ENCODE measurements at regions of chr1 and their contacts with region 1.

Region 1: DNA sequence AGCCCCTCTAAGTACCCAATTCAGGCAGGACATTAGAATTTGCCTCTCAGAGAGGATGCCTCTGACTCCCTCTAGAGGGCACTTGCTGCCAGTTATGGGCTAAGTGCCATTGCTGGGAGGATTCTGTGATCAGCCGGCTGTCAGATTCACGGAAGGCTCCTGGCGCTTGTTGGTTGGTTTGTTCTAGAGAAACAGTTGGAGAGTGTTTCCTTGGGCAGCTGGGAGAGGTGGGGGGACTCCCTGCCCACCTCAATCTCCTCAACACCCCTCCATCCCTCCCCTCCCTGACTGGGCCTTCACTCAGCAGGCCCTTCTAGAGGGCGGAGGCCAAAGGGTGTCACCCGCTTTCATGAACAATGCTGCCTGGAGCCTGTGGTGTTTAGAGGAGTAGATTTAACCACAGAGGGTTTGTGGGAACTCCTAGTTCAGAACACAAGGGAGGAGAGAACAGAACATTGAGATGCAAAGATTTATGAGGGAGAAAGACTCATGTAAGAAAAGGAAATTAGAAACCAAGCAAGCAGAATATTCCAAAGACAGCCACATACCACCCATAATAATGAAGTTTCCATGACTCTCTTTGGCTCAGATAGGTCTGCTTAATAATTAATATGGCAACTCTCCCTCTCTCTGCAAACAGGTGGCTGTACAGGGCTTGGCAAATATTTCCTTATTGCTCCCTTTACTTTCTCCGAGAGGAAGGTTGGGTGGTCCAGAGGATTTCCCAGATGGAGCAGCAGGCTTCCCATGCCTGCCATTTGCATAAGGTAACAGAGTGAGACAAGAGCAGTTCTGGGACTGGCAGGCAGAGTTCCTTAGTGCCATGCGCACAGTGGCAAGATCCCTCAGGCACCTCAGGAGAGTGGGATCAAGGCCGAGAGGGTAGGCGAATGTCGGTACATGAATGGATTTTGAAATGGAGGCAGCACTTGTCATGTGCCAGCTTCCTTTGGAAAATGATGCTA is 30.0 kb upstream of the ACP6 start:
- DNase-seq: peak; percentile 81
- H3K4me3 Mint-ChIP-seq: no peak overlapping the region
- H3K27ac Mint-ChIP-seq: no peak overlapping the region
- H3K4me1 Mint-ChIP-seq: peaks cover 7% of the 10 kb centered on the region
- H3K27me3 Mint-ChIP-seq: no peaks in the 10 kb centered on the region
- CTCF ChIP-seq: peak; percentile 96

Region 2: DNA sequence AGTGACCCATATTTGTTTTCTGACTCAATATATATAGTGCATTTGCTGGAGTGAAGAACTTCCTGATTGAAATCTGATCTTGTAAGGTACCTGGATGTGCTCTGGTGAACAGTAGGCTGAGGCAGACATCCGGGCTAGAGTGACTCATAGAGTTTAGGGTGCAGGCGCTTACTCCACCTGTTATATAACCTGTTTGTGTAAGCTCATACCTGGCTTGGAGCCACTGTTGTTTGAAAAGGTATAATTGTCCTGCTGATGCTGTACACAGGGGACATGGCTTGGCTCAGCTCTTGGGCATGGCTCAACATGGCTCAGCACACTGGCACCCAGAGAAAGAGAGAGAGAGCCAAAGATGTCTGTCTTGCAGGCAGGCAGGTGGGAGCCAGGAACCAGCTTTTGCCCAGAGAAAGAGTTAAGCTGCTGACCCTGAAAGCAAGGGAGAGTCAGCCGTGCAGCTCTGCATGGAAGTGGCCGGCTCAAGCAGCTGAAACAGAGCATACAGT is 16.8 kb after region 1 on chr1:
- CTCF ChIA-PET with region 1: interaction called, 23 read pairs
- POLR2A ChIA-PET with region 1: interaction called, 6 read pairs
- intact Hi-C with region 1: no loop called
- DNase-seq: peak; percentile 88
- H3K4me3 Mint-ChIP-seq: no peak overlapping the region
- H3K27ac Mint-ChIP-seq: no peak overlapping the region
- H3K4me1 Mint-ChIP-seq: peaks cover 23% of the 10 kb centered on the region
- H3K27me3 Mint-ChIP-seq: peaks cover 15% of the 10 kb centered on the region
- CTCF ChIP-seq: no peak

Region 3: DNA sequence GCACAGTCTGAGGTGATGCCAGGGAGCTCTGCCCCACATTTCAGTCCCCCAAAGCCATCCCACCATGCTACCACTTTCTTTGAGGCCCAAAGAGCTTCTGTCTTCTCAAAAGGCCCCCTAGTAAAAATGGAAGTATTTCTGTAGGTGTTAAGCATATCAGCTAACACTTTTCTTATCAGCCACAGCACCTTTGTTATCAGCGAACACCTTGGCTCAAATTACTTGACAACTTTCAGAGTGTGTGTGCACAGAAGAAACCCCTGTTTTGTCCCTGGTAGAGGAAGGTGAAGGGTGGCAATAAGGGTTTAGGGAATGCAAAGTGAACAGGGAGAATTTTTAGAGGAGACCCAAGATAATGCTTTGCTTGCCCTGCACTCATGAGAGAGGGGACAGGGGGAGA is 147.5 kb after region 1 on chr1:
- CTCF ChIA-PET with region 1: no interaction called
- POLR2A ChIA-PET with region 1: no interaction called
- intact Hi-C with region 1: no loop called
- DNase-seq: no peak
- H3K4me3 Mint-ChIP-seq: no peak overlapping the region
- H3K27ac Mint-ChIP-seq: no peak overlapping the region
- H3K4me1 Mint-ChIP-seq: peaks cover 8% of the 10 kb centered on the region
- H3K27me3 Mint-ChIP-seq: no peaks in the 10 kb centered on the region
- CTCF ChIP-seq: no peak

Measured in MCF 10A (cell line).